ENCODE measurements at regions of chr2 and their contacts with region 1.

Region 1: DNA sequence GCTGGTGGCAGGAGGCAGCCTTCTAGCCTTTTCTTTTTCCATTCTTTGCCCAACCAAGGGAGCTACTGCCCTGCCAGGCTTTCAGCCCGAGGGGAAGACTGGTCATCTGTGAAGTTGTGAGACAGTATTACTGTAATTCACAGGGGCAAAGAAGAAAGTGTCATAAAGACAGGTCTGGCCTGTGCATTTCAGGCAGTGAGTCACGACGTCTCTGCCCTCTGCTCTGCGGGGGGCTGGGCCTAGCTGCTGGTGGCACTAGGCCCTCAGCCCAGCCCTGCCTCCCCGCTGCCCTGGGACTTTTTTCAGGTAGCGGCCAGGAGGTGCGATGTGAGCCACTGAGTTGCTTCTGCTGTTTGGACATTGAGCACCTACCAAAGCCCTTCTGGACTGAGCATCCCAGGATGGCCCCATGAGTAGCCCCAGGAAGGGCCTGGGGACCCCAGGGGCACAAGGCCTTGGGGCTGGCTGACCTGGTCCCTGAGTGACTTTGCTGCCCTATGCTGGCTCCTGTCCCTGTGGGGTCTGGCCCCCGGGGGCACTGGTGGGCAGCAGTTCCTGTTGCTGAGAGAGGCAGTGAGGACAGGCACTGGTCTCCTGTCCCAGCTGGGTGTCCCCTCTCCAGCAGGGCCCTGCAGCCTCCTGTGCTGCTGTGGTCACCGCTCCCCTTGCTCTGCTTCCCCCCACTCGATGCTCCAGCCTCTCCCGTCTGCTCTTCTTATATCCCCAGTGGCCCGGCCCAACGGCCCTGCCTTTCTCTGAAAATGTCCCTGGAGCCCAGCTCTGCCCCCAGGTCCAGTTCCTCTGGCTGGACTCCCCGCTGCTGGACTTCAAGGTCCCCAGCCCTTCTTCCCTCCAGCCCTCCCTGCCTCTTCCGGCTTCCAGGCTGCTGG is 7.0 kb downstream of the INHBB start:
- DNase-seq: peak in 1 of 2 donors; percentile 48
- ATAC-seq: no peak
- H3K4me3 ChIP-seq: no peak overlapping the region
- H3K27ac ChIP-seq: no peak overlapping the region
- H3K4me1 ChIP-seq: no peaks in the 10 kb centered on the region
- H3K27me3 ChIP-seq: no peaks in the 10 kb centered on the region
- CTCF ChIP-seq: no peak

Region 2: GRCh38 chr2:119059287-119059686 is 1293.7 kb before region 1 on chr2:
- intact Hi-C with region 1: no loop called
- DNase-seq: no peak
- ATAC-seq: no peak
- H3K4me3 ChIP-seq: no peak overlapping the region
- H3K27ac ChIP-seq: no peak overlapping the region
- H3K4me1 ChIP-seq: no peaks in the 10 kb centered on the region
- H3K27me3 ChIP-seq: peaks cover 0 to 4% (median 0%) of the 10 kb centered on the region in 3 donors
- CTCF ChIP-seq: no peak

Region 3: GRCh38 chr2:120453635-120453998 is 100.7 kb after region 1 on chr2:
- intact Hi-C with region 1: loop called in 1 of 2 experiments (anchors 5 kb)
- DNase-seq: no peak
- ATAC-seq: peak in 3 of 4 donors; percentile 58 to 77 (median 64)
- H3K4me3 ChIP-seq: no peak overlapping the region
- H3K27ac ChIP-seq: no peak overlapping the region
- H3K4me1 ChIP-seq: no peaks in the 10 kb centered on the region
- H3K27me3 ChIP-seq: no peaks in the 10 kb centered on the region
- CTCF ChIP-seq: no peak

Measured in psoas muscle (tissue), 8 donors.